Activated CD4-positive, alpha-beta memory T cell treated with anti-CD3 and anti-CD28 coated beads, Interleukin-2, amount 10 ng/mL, durations not matched to agents 7 days and 5 days (primary cell): ENCODE measurements at regions of chr12 and their contacts with region 1.

Region 1: GRCh38 chr12:55715833-55716581 is at the start of gene BLOC1S1:
- DNase-seq: peak; percentile 95
- H3K4me3 Mint-ChIP-seq: peak within 1 kb of the TSS; percentile 94
- H3K27ac Mint-ChIP-seq: peak within 1 kb of the TSS; percentile 93
- H3K4me1 Mint-ChIP-seq: peaks cover 54% of the 10 kb centered on the region
- H3K27me3 Mint-ChIP-seq: peaks cover 10% of the 10 kb centered on the region
- total RNA-seq, gene BLOC1S1: 156 to 162 TPM

Region 2: GRCh38 chr12:55681142-55682077 is 34.6 kb before region 1 on chr12:
- CTCF ChIA-PET with region 1: no interaction called
- POLR2A ChIA-PET with region 1: no interaction called
- DNase-seq: no peak
- H3K4me3 Mint-ChIP-seq: no peak overlapping the region
- H3K27ac Mint-ChIP-seq: no peak overlapping the region
- H3K4me1 Mint-ChIP-seq: peaks cover 1% of the 10 kb centered on the region
- H3K27me3 Mint-ChIP-seq: peaks cover 31% of the 10 kb centered on the region

Region 3: GRCh38 chr12:55728939-55729823 is 13.2 kb after region 1 on chr12 and contains the start of gene CD63:
- CTCF ChIA-PET with region 1: interaction called, 16 read pairs
- POLR2A ChIA-PET with region 1: interaction called, 84 read pairs
- DNase-seq: peak; percentile 67
- H3K4me3 Mint-ChIP-seq: peak within 1 kb of the TSS; percentile 87
- H3K27ac Mint-ChIP-seq: peak within 1 kb of the TSS; percentile 85
- H3K4me1 Mint-ChIP-seq: peaks cover 44% of the 10 kb centered on the region
- H3K27me3 Mint-ChIP-seq: no peaks in the 10 kb centered on the region
- total RNA-seq, gene CD63: 177 to 185 TPM

Region 4: DNA sequence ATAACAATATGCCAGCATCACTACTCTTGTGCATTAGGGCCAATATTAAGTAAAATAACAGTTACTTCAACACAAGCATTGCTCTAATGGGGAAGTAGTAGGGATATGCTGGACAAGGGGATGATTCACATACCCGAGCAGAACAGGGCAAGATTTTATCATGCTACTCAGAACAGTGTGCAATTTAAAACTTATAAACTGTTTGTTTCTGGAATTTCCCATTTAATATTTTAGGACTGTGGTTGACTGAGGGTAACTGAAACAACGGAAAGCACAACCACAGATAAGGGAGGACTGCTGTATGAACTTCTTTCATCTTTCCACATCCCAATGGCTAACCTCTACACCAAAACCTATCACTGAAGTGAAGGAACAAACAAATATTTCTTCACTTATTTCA is 64.7 kb after region 1 on chr12:
- CTCF ChIA-PET with region 1: no interaction called
- POLR2A ChIA-PET with region 1: no interaction called
- DNase-seq: no peak
- H3K4me3 Mint-ChIP-seq: no peak overlapping the region
- H3K27ac Mint-ChIP-seq: no peak overlapping the region
- H3K4me1 Mint-ChIP-seq: peaks cover 17% of the 10 kb centered on the region
- H3K27me3 Mint-ChIP-seq: no peaks in the 10 kb centered on the region